ENCODE measurements at regions of chr11 and their contacts with region 1.

Region 1: GRCh38 chr11:68383976-68384501 is 71.6 kb downstream of the LRP5 start:
- DNase-seq: no peak
- H3K4me3 ChIP-seq: no peak overlapping the region
- H3K27ac ChIP-seq: peak overlapping the region; percentile 83 to 88 (median 85)
- H3K4me1 ChIP-seq: peaks cover 51 to 60% (median 55%) of the 10 kb centered on the region in 4 donors
- H3K27me3 ChIP-seq: no peaks in the 10 kb centered on the region
- CTCF ChIP-seq: peak; percentile 90 to 98 (median 91)
- EP300 ChIP-seq: no peak
- POLR2A ChIP-seq: no peak

Region 2: GRCh38 chr11:68271781-68272608 is 112.0 kb before region 1 on chr11 and contains the start of gene C11orf24:
- intact Hi-C with region 1: loop called (anchors 5 kb)
- DNase-seq: peak; percentile 99
- H3K4me3 ChIP-seq: peak within 1 kb of the TSS; percentile 58 to 81 (median 72)
- H3K27ac ChIP-seq: peak within 1 kb of the TSS; percentile 89 to 96 (median 92)
- H3K4me1 ChIP-seq: peaks cover 24 to 55% (median 46%) of the 10 kb centered on the region in 4 donors
- H3K27me3 ChIP-seq: no peaks in the 10 kb centered on the region
- CTCF ChIP-seq: peak in 2 of 3 experiments; percentile 6 to 15
- EP300 ChIP-seq: no peak
- POLR2A ChIP-seq: peak; percentile 79
- total RNA-seq, gene C11orf24: 27.0 to 41.5 (median 31.5) TPM

Region 3: DNA sequence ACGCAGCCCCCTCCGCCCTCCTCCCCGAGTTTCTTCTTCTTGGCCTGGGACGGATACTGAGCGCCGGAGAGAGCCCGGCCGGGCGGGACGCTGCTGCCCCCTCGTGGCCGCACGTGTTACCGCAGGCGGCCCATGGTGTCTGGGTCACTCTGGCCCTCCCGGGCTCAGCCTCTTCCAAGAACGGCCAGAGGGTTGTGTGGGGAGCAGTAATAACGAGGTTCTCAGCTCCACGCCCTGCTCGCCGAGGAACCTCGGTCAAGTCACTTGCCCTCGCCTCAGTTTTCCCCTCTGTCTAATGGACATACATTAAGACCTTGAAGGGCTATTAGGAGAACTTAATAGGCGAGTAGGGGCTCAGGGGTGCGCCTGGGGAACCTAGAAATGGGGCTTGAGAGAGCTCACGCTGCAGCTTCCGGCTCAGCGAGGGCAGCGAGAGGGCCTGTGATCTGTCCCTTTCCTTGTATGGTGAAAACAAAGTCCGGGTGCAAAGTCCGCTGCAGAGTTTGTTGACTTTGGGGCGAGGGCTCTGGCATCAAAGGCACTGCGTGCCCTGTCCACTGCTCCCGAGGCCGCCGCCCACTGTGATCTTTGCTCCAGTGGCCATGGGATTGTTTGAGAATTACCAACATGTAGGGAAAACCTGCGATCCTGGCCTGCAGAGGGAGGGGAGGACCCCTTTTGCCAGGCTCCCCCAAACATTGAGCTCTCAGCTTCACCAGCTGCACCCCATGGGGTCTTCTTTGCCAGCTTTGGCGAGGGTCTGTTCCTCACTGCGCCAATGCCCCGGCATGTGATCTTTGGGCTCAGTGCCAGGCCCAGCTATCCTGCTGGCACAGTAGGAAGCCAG is 86.0 kb before region 1 on chr11:
- intact Hi-C with region 1: loop called (anchors 5 kb)
- DNase-seq: peak; percentile 94
- H3K4me3 ChIP-seq: peak overlapping the region; percentile 8 to 29 (median 15)
- H3K27ac ChIP-seq: peak overlapping the region in 1 of 4 donors; percentile 5
- H3K4me1 ChIP-seq: peaks cover 16 to 26% (median 23%) of the 10 kb centered on the region in 4 donors
- H3K27me3 ChIP-seq: no peaks in the 10 kb centered on the region
- CTCF ChIP-seq: peak in 2 of 3 experiments; percentile 99
- EP300 ChIP-seq: no peak
- POLR2A ChIP-seq: no peak

Region 4: GRCh38 chr11:68312117-68312779 is 71.8 kb before region 1 on chr11 and contains the start of gene LRP5:
- intact Hi-C with region 1: loop called (anchors 2 kb)
- DNase-seq: no peak
- H3K4me3 ChIP-seq: peak within 1 kb of the TSS; percentile 67 to 86 (median 76)
- H3K27ac ChIP-seq: peak within 1 kb of the TSS; percentile 88 to 90 (median 90)
- H3K4me1 ChIP-seq: peaks cover 42 to 51% (median 45%) of the 10 kb centered on the region in 4 donors
- H3K27me3 ChIP-seq: no peaks in the 10 kb centered on the region
- CTCF ChIP-seq: no peak
- EP300 ChIP-seq: no peak
- POLR2A ChIP-seq: no peak
- total RNA-seq, gene LRP5: 34.0 to 78.4 (median 56.2) TPM

Region 5: GRCh38 chr11:68447015-68447801 is 63.2 kb after region 1 on chr11:
- intact Hi-C with region 1: loop called (anchors 2 kb)
- DNase-seq: no peak
- H3K4me3 ChIP-seq: no peak overlapping the region
- H3K27ac ChIP-seq: peak overlapping the region in 3 of 4 donors; percentile 2 to 48 (median 37)
- H3K4me1 ChIP-seq: peaks cover 0 to 14% (median 9%) of the 10 kb centered on the region in 4 donors
- H3K27me3 ChIP-seq: no peaks in the 10 kb centered on the region
- CTCF ChIP-seq: peak; percentile 91 to 97 (median 92)
- EP300 ChIP-seq: no peak
- POLR2A ChIP-seq: no peak

Region 6: DNA sequence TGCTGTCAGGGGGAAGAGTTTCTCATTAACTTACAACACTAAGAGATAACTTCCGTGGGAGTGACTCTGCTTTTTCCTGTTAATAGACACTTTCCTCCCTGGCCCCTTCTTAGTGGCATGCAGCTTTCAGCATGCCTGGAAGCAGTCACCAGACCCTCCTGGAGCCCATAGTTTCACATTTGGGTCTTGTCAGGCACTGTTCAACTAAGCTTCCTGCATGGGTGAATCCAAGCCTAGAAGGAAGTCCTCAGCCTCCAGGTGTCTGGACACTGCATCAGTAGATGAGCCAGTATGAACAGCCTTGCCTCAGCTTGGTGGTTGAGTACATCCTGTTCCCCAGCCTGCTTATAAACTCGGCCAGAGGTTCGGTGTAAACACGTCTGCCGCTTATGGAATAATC is 144.6 kb after region 1 on chr11:
- intact Hi-C with region 1: no loop called
- DNase-seq: no peak
- H3K4me3 ChIP-seq: no peak overlapping the region
- H3K27ac ChIP-seq: peak overlapping the region in 1 of 4 donors; percentile 8
- H3K4me1 ChIP-seq: peaks cover 44 to 70% (median 62%) of the 10 kb centered on the region in 4 donors
- H3K27me3 ChIP-seq: no peaks in the 10 kb centered on the region
- CTCF ChIP-seq: no peak
- EP300 ChIP-seq: no peak
- POLR2A ChIP-seq: no peak